Ovary (tissue), 10 donors: ENCODE measurements at regions of chr4 and their contacts with region 1.

Region 1: DNA sequence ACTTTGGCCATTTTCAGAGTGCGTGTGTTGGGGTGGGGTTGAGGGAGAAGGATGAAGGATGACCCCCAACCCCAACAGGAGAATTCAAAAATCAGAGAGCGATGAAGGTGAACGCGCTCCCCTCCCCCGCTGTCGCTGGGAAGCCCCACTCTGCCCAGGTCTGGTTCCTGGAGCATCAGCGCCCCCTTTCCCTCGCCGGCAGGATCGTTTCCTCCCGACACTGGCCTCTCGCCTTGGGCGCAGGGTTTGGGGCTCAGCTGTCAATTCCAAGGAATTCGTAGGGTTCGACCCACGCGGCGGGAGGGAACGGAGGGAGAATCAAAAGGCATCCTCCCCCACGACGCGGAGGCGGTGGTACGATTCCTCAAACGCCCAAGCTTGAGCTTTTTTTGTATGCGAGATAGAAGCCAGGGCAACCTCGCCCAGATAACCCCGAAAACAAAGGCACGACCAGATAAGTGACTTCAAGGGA is 1.0 kb upstream of the PDGFRA start:
- DNase-seq: peak; percentile 92 to 95 (median 93)
- H3K4me3 ChIP-seq: peak overlapping the region; percentile 32
- H3K27ac ChIP-seq: peak overlapping the region; percentile 59 to 81
- H3K4me1 ChIP-seq: peaks cover 4% of the 10 kb centered on the region
- H3K27me3 ChIP-seq: no peaks in the 10 kb centered on the region
- CTCF ChIP-seq: peak; percentile 70 to 91 (median 87)
- EP300 ChIP-seq: no peak
- POLR2A ChIP-seq: peak; percentile 28

Region 2: GRCh38 chr4:52996261-52996892 is 1231.7 kb before region 1 on chr4:
- intact Hi-C with region 1: loop called in 2 of 4 experiments (anchors 5 kb)
- DNase-seq: peak; percentile 41 to 80 (median 76)
- H3K4me3 ChIP-seq: no peak overlapping the region
- H3K27ac ChIP-seq: peak overlapping the region; percentile 63
- H3K4me1 ChIP-seq: peaks cover 37% of the 10 kb centered on the region
- H3K27me3 ChIP-seq: no peaks in the 10 kb centered on the region
- CTCF ChIP-seq: no peak
- EP300 ChIP-seq: peak; percentile 93
- POLR2A ChIP-seq: peak; percentile 35

Region 3: GRCh38 chr4:53196882-53197771 is 1031.0 kb before region 1 on chr4:
- intact Hi-C with region 1: loop called in 3 of 4 experiments (anchors 5 to 10 kb)
- DNase-seq: no peak
- H3K4me3 ChIP-seq: no peak overlapping the region
- H3K27ac ChIP-seq: no peak overlapping the region
- H3K4me1 ChIP-seq: no peaks in the 10 kb centered on the region
- H3K27me3 ChIP-seq: no peaks in the 10 kb centered on the region
- CTCF ChIP-seq: peak; percentile 50 to 83 (median 62)
- EP300 ChIP-seq: no peak
- POLR2A ChIP-seq: no peak

Region 4: GRCh38 chr4:53908661-53909078 is 319.4 kb before region 1 on chr4:
- intact Hi-C with region 1: loop called (anchors 5 to 10 kb)
- DNase-seq: peak in 3 of 5 donors; percentile 39 to 67 (median 56)
- H3K4me3 ChIP-seq: no peak overlapping the region
- H3K27ac ChIP-seq: peak overlapping the region in 1 of 2 donors; percentile 67
- H3K4me1 ChIP-seq: peaks cover 6% of the 10 kb centered on the region
- H3K27me3 ChIP-seq: no peaks in the 10 kb centered on the region
- CTCF ChIP-seq: peak; percentile 52 to 74 (median 72)
- EP300 ChIP-seq: no peak
- POLR2A ChIP-seq: no peak

Region 5: GRCh38 chr4:53929955-53930798 is 297.9 kb before region 1 on chr4:
- intact Hi-C with region 1: loop called in 3 of 4 experiments (anchors 5 kb)
- DNase-seq: peak; percentile 65 to 87 (median 76)
- H3K4me3 ChIP-seq: no peak overlapping the region
- H3K27ac ChIP-seq: no peak overlapping the region
- H3K4me1 ChIP-seq: no peaks in the 10 kb centered on the region
- H3K27me3 ChIP-seq: no peaks in the 10 kb centered on the region
- CTCF ChIP-seq: peak; percentile 60 to 83 (median 76)
- EP300 ChIP-seq: no peak
- POLR2A ChIP-seq: no peak

Region 6: GRCh38 chr4:54197926-54198325 is 30.2 kb before region 1 on chr4:
- intact Hi-C with region 1: no loop called
- DNase-seq: no peak
- H3K4me3 ChIP-seq: no peak overlapping the region
- H3K27ac ChIP-seq: no peak overlapping the region
- H3K4me1 ChIP-seq: peaks cover 5% of the 10 kb centered on the region
- H3K27me3 ChIP-seq: no peaks in the 10 kb centered on the region
- CTCF ChIP-seq: no peak
- EP300 ChIP-seq: no peak
- POLR2A ChIP-seq: no peak